Activated T-helper 2 cell treated with anti-CD3 and anti-CD28 coated beads, Interferon-gamma antibody, Interleukin-2, Interleukin-4, amounts not matched to agents 10 μg/mL and 5 μg/mL and 100 μg/mL, durations not matched to agents 14 hours and 24 hours and 36 hours (primary cell): ENCODE measurements at regions of chr9 and their contacts with region 1.

Region 1: GRCh38 chr9:112717661-112718341 is at the start of gene INIP:
- DNase-seq: peak; percentile 98
- H3K4me3 Mint-ChIP-seq: peak within 1 kb of the TSS; percentile 91
- H3K27ac Mint-ChIP-seq: peak within 1 kb of the TSS; percentile 97
- H3K4me1 Mint-ChIP-seq: peaks cover 33% of the 10 kb centered on the region
- H3K27me3 Mint-ChIP-seq: no peaks in the 10 kb centered on the region
- total RNA-seq, gene INIP: 34.2 and 36.6 TPM in 2 replicates

Region 2: DNA sequence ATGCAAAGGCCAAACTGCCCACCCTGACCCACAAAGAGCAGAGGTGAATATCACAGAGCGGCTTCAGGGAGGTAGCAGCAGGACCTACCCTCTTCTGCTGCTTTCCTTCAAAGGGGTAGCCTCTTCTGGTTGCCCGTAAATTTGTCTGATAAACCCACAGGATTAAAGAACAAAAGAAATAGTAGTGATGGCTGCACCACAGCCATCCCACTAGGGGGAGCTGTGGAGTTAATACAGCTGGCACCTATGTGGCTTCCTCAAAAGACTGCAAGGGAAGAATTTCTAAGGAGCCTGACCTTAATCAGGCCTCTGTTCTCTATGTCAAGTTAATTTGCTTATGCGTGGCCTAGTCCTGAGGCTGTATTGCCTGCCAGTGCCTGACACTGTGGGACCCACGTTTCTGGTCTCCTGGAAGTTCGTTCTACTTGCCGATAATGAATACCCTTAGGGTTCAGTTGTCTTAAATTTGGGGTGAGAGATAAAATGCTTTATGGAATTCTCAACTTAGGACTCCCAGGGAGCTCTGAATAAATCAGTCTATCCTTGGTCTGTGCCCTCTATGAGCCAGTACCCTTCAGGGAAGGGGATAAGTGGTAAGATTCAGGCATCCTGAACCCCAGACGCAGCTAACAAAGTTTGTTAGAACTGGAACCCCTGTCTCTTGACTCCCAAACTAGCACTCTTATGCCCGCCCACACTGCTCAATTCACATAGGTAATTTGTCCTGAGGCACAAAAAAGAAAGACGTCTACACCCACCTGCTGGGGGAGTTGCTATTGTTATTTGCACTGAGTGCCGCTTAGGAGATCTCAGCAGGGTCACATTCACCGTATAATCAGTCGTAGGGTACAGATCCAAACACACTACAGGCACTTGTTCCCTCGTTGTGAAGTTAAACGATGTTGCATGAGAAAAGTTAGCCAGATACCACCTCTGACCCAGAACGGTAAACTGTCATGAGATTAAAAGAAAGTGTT is 619.8 kb before region 1 on chr9:
- intact Hi-C with region 1: loop called (anchors 10 kb)
- DNase-seq: peak; percentile 59
- H3K4me3 Mint-ChIP-seq: no peak overlapping the region
- H3K27ac Mint-ChIP-seq: no peak overlapping the region
- H3K4me1 Mint-ChIP-seq: peaks cover 27% of the 10 kb centered on the region
- H3K27me3 Mint-ChIP-seq: no peaks in the 10 kb centered on the region

Region 3: GRCh38 chr9:112486221-112487007 is 231.4 kb before region 1 on chr9 and contains the start of gene KIAA1958:
- intact Hi-C with region 1: loop called (anchors 1 kb)
- DNase-seq: peak; percentile 86
- H3K4me3 Mint-ChIP-seq: peak within 1 kb of the TSS; percentile 98
- H3K27ac Mint-ChIP-seq: peak within 1 kb of the TSS; percentile 97
- H3K4me1 Mint-ChIP-seq: peaks cover 33% of the 10 kb centered on the region
- H3K27me3 Mint-ChIP-seq: no peaks in the 10 kb centered on the region
- total RNA-seq, gene KIAA1958: 10.7 and 11.4 TPM in 2 replicates

Region 4: GRCh38 chr9:112546149-112547012 is 171.4 kb before region 1 on chr9:
- intact Hi-C with region 1: loop called (anchors 1 kb)
- DNase-seq: no peak
- H3K4me3 Mint-ChIP-seq: no peak overlapping the region
- H3K27ac Mint-ChIP-seq: peak overlapping the region; percentile 36
- H3K4me1 Mint-ChIP-seq: peaks cover 13% of the 10 kb centered on the region
- H3K27me3 Mint-ChIP-seq: no peaks in the 10 kb centered on the region

Region 5: GRCh38 chr9:112558476-112558875 is 159.3 kb before region 1 on chr9:
- intact Hi-C with region 1: no loop called
- DNase-seq: no peak
- H3K4me3 Mint-ChIP-seq: no peak overlapping the region
- H3K27ac Mint-ChIP-seq: no peak overlapping the region
- H3K4me1 Mint-ChIP-seq: peaks cover 4% of the 10 kb centered on the region
- H3K27me3 Mint-ChIP-seq: no peaks in the 10 kb centered on the region

Region 6: GRCh38 chr9:112750111-112750767 is 32.4 kb after region 1 on chr9 and contains the start of gene SNX30:
- intact Hi-C with region 1: loop called (anchors 1 kb)
- DNase-seq: peak; percentile 79
- H3K4me3 Mint-ChIP-seq: peak within 1 kb of the TSS; percentile 84
- H3K27ac Mint-ChIP-seq: peak within 1 kb of the TSS; percentile 86
- H3K4me1 Mint-ChIP-seq: peaks cover 52% of the 10 kb centered on the region
- H3K27me3 Mint-ChIP-seq: peaks cover 3% of the 10 kb centered on the region
- total RNA-seq, gene SNX30: 2.4 and 2.8 TPM in 2 replicates

Region 7: GRCh38 chr9:112793213-112793810 is 75.5 kb after region 1 on chr9:
- intact Hi-C with region 1: loop called (anchors 1 kb)
- DNase-seq: peak; percentile 59
- H3K4me3 Mint-ChIP-seq: no peak overlapping the region
- H3K27ac Mint-ChIP-seq: no peak overlapping the region
- H3K4me1 Mint-ChIP-seq: peaks cover 4% of the 10 kb centered on the region
- H3K27me3 Mint-ChIP-seq: no peaks in the 10 kb centered on the region